GM12878 (cell line): ENCODE measurements at regions of chr18 and their contacts with region 1.

Region 1: GRCh38 chr18:35231052-35231451 is 9.8 kb upstream of the ZNF397 start:
- DNase-seq: peak; percentile 33
- ATAC-seq: peak; percentile 95
- H3K4me3 ChIP-seq: peak overlapping the region; percentile 37; the same call in 1 of the 2 replicates
- H3K27ac ChIP-seq: no peak overlapping the region
- H3K4me1 ChIP-seq: no peaks in the 10 kb centered on the region
- H3K27me3 ChIP-seq: no peaks in the 10 kb centered on the region
- CTCF ChIP-seq: peak; percentile 89 to 95 (median 89)
- EP300 ChIP-seq: no peak
- POLR2A ChIP-seq: no peak
- RAD21 ChIP-seq: peak; percentile 96

Region 2: DNA sequence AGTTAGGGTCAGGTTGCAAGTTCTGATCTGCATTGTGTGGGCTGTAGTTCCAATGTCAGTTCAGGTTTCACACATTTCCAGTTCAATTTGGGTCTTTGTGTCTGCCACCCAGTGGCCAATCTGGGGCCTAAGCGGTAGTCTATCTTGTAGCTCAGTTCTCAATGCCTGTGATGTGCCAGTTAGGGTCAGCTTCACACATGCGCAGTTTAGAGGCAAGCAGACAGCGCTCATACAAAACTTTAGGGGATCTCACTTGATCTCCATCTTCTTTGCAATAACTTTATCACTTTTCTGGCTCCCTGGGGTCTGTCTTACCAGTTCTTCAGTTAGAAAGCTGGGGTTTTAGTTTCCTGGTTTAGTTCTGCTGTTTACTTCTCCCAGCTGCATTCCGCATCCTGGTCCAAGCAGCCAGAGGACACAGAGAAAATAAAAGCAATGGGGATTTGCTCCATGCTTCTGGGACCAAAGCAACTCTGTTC is 124.1 kb after region 1 on chr18:
- CTCF ChIA-PET with region 1: interaction called, 65 read pairs
- POLR2A ChIA-PET with region 1: interaction called, 3 read pairs
- RAD21 ChIA-PET with region 1: interaction called, 22 read pairs
- SMC1A ChIA-PET with region 1: interaction called, 23 read pairs
- in situ Hi-C with region 1: no loop called
- intact Hi-C with region 1: loop called (anchors 1 kb)
- DNase-seq: no peak
- ATAC-seq: peak; percentile 100
- H3K4me3 ChIP-seq: no peak overlapping the region
- H3K27ac ChIP-seq: no peak overlapping the region
- H3K4me1 ChIP-seq: no peaks in the 10 kb centered on the region
- H3K27me3 ChIP-seq: no peaks in the 10 kb centered on the region
- CTCF ChIP-seq: peak; percentile 73 to 76 (median 76)
- EP300 ChIP-seq: no peak
- POLR2A ChIP-seq: no peak
- RAD21 ChIP-seq: peak; percentile 67